Psoas muscle (tissue), 8 donors: ENCODE measurements at regions of chr1 and their contacts with region 1.

Region 1: DNA sequence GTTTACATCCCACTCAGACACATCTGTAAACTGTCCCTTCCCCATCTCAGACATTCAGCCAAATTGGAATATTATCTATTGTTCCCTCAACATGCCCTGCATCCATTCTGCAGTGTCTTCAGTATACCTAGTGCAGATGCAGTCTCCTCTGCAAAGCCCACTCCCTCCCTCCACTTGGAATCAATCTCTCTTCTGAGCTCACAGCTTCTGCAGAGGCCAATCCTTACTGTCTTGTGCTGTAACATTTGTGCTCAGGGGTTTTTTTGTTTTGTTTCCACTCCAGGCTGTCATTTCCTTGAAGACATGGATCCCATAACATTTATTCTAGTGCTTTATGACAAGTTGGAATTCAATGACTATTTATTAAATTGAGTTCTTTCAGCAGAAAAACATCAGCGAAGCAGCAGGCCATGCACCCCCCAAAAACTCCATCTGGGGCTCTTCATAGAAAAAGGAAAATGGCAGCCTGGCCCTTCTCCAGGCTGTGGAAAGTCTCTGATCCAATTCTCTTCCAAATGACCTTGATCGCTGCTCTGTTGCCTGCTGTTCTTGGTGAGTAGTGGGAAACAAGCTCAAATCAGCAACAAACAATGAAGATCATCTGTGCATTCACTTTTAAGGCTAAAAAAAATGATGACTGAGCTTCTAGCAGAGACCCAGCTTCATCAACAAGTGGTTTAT is 8.7 kb downstream of the C4BPA start:
- DNase-seq: no peak
- ATAC-seq: no peak
- H3K4me3 ChIP-seq: no peak overlapping the region
- H3K27ac ChIP-seq: no peak overlapping the region
- H3K4me1 ChIP-seq: no peaks in the 10 kb centered on the region
- H3K27me3 ChIP-seq: peaks cover 0 to 4% (median 0%) of the 10 kb centered on the region in 3 donors
- CTCF ChIP-seq: no peak

Region 2: DNA sequence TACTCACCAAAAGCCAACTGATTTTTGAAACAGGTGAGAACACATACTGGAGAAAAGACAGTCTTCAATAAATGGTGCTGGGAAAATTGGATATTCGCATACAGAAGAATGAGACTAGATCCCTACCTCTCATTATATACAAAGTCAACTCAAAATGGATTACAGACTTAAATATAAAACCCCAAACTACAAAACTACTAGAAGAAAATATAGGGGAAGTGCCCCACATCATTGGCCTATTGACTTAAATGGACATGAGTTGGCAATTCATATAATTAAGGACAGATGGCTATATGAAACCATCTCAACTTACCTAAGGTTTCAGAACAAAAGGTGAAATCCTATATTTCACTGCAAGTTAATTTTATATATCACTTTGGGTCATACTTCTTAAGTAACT is 51.3 kb after region 1 on chr1:
- intact Hi-C with region 1: loop called in 1 of 2 experiments (anchors 5 kb)
- DNase-seq: no peak
- ATAC-seq: no peak
- H3K4me3 ChIP-seq: no peak overlapping the region
- H3K27ac ChIP-seq: no peak overlapping the region
- H3K4me1 ChIP-seq: no peaks in the 10 kb centered on the region
- H3K27me3 ChIP-seq: no peaks in the 10 kb centered on the region
- CTCF ChIP-seq: no peak

Region 3: DNA sequence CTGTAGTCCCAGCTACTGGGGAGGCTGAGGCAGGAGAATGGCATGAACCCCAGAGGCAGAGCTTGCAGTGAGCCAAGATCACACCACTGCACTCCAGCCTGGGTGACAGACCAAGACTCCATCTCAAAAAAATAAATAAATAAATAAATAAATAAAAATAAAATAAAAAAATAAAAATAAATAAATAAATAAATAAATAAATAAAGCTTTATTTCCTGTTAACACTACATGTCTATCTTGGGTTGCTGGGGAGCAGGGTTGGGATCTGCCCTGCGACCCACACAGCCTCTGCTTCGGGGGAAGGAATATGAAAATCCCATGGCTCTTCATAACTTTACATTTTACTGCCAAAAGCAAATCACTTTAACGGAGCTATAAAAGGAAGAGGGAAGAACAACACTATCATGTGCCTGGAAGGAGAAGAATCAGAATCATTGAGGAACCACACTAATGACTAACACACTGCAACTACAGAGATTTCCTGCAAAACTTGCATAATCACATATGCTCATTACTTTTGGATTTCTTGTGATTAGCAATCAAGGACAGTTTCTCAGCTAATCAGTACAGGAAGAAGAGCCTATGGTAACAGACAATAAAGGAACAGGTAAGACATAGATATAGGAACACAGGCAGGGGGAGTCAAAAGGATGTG is 135.9 kb after region 1 on chr1:
- intact Hi-C with region 1: no loop called
- DNase-seq: no peak
- ATAC-seq: no peak
- H3K4me3 ChIP-seq: no peak overlapping the region
- H3K27ac ChIP-seq: no peak overlapping the region
- H3K4me1 ChIP-seq: no peaks in the 10 kb centered on the region
- H3K27me3 ChIP-seq: no peaks in the 10 kb centered on the region
- CTCF ChIP-seq: no peak